ENCODE measurements at regions of chr19 and their contacts with region 1.

Region 1: GRCh38 chr19:44776435-44777096 is 1.1 kb upstream of the CBLC start:
- DNase-seq: peak; percentile 96 to 97
- H3K4me3 ChIP-seq: peak overlapping the region; percentile 99
- H3K27ac ChIP-seq: peak overlapping the region; percentile 97
- H3K4me1 ChIP-seq: peaks cover 73% of the 10 kb centered on the region
- H3K27me3 ChIP-seq: no peaks in the 10 kb centered on the region
- CTCF ChIP-seq: no peak

Region 2: GRCh38 chr19:44435481-44435880 is 341.1 kb before region 1 on chr19:
- CTCF ChIA-PET with region 1: no interaction called
- POLR2A ChIA-PET with region 1: no interaction called
- intact Hi-C with region 1: no loop called
- DNase-seq: no peak
- H3K4me3 ChIP-seq: no peak overlapping the region
- H3K27ac ChIP-seq: no peak overlapping the region
- H3K4me1 ChIP-seq: no peaks in the 10 kb centered on the region
- H3K27me3 ChIP-seq: no peaks in the 10 kb centered on the region
- CTCF ChIP-seq: no peak

Region 3: GRCh38 chr19:44447916-44448674 is 328.5 kb before region 1 on chr19 and contains the start of gene ZNF229:
- CTCF ChIA-PET with region 1: no interaction called
- POLR2A ChIA-PET with region 1: interaction called, 14 read pairs
- intact Hi-C with region 1: no loop called
- DNase-seq: peak; percentile 89 to 96
- H3K4me3 ChIP-seq: peak within 1 kb of the TSS; percentile 64
- H3K27ac ChIP-seq: peak within 1 kb of the TSS; percentile 48
- H3K4me1 ChIP-seq: peaks cover 15% of the 10 kb centered on the region
- H3K27me3 ChIP-seq: peaks cover 32% of the 10 kb centered on the region
- CTCF ChIP-seq: no peak
- total RNA-seq, gene ZNF229: 11.3 and 12.3 TPM in 2 replicates

Region 4: GRCh38 chr19:44718441-44719261 is 57.9 kb before region 1 on chr19:
- CTCF ChIA-PET with region 1: interaction called, 55 read pairs
- POLR2A ChIA-PET with region 1: interaction called, 21 read pairs
- intact Hi-C with region 1: no loop called
- DNase-seq: peak; percentile 75 to 79
- H3K4me3 ChIP-seq: peak overlapping the region; percentile 32; the same call in 1 of the 2 replicates
- H3K27ac ChIP-seq: peak overlapping the region; percentile 86
- H3K4me1 ChIP-seq: peaks cover 57% of the 10 kb centered on the region
- H3K27me3 ChIP-seq: no peaks in the 10 kb centered on the region
- CTCF ChIP-seq: no peak

Region 5: DNA sequence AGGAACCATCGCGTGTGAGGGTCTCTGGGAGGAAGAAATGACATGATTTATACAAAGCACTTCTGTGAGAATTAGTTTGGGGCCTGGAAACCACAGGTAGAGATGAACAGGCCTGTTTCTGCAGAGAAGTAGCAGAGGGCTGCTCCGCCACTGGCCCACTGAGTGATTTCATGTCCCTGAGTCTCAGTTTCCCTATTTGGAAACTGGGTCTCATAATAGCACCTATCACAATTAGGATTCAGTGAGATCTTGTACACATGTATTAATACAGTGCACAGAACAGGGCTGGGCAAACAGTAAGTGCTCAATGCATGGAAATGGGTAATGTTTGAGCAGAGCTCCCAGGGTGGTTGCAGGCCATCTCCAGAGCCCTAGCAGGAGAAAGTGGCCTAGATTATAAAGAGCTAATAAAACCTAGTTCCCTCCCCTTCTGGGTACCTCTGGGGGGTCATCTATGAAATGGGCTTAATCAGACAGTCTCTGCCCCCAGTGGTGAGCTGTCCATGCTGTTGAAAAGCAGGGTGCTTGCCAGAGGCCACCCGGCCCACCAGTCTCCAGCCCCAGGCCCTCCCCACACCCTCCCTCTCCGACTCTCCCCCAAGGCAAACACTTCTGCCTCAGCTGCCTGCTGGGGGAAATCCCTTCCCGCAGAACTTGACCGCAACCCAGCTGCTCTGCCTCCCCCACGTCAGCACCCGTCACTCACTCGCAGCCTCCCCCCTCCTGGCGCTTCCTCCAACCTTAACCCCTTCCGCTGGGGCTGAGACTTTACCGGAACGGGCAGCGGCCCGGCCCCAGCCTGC is 23.5 kb before region 1 on chr19:
- CTCF ChIA-PET with region 1: interaction called, 13 read pairs
- POLR2A ChIA-PET with region 1: interaction called, 5 read pairs
- intact Hi-C with region 1: loop called (anchors 2 kb)
- DNase-seq: peak; percentile 84 to 91
- H3K4me3 ChIP-seq: peak overlapping the region; percentile 42; the same call in 1 of the 2 replicates
- H3K27ac ChIP-seq: peak overlapping the region; percentile 16
- H3K4me1 ChIP-seq: peaks cover 50% of the 10 kb centered on the region
- H3K27me3 ChIP-seq: no peaks in the 10 kb centered on the region
- CTCF ChIP-seq: no peak

Region 6: DNA sequence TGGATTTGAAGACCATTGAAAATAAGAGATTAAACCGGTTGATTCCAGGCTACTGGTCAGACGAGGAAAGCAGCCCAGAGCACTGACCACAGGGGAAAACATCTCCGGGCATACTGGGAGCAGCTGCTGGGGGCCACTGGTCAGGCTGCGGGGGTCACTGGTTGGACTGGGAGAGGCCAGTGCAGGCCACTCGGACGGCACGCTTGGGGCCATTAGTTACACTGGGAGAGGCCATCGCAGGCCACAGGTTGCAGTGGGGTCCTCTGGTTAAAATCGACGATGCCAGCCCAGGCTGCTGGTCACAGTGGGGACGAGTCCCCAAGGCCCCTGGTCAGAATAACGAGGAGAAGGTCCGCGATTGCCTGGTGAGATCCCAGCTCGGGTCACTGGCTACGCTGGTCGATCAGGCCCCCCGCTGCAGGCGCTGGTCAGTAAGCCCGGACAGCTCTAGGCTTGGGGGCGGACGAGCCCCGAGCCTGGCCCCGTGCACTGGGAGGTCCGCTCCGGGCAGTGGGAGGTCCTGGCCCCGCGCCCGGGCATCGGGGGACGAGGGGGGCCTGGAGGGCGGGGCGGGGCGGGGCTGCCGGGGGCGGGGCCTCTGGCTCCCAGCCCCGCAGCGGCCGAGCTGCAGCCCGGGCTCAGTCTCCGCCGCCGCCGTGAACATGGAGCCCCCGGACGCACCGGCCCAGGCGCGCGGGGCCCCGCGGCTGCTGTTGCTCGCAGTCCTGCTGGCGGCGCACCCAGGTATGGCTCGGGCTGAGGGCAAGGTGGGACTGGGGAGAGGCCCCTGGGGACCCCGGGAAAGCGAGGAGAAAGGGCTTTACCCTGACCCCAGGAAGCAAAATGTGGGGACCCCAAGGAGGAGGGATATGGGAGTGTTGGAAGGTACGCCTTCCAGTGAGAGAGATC is 32.2 kb after region 1 on chr19 and contains the start of gene BCAM:
- CTCF ChIA-PET with region 1: interaction called, 17 read pairs
- POLR2A ChIA-PET with region 1: interaction called, 14 read pairs
- intact Hi-C with region 1: loop called (anchors 1 kb)
- DNase-seq: peak; percentile 55 to 88
- H3K4me3 ChIP-seq: peak within 1 kb of the TSS; percentile 95
- H3K27ac ChIP-seq: peak within 1 kb of the TSS; percentile 80
- H3K4me1 ChIP-seq: peaks cover 43% of the 10 kb centered on the region
- H3K27me3 ChIP-seq: no peaks in the 10 kb centered on the region
- CTCF ChIP-seq: no peak
- total RNA-seq, gene BCAM: 146 and 199 TPM in 2 replicates

Region 7: GRCh38 chr19:46373421-46374359 is 1597.1 kb after region 1 on chr19:
- CTCF ChIA-PET with region 1: no interaction called
- POLR2A ChIA-PET with region 1: interaction called, 12 read pairs
- intact Hi-C with region 1: no loop called
- DNase-seq: peak; percentile 99
- H3K4me3 ChIP-seq: peak overlapping the region; percentile 21; the same call in 1 of the 2 replicates
- H3K27ac ChIP-seq: peak overlapping the region; percentile 92
- H3K4me1 ChIP-seq: peaks cover 55% of the 10 kb centered on the region
- H3K27me3 ChIP-seq: no peaks in the 10 kb centered on the region
- CTCF ChIP-seq: peak; percentile 42; the same call in 1 of the 2 replicates

Measured in PC-9 (cell line).